ENCODE measurements at regions of chr7 and their contacts with region 1.

Region 1: DNA sequence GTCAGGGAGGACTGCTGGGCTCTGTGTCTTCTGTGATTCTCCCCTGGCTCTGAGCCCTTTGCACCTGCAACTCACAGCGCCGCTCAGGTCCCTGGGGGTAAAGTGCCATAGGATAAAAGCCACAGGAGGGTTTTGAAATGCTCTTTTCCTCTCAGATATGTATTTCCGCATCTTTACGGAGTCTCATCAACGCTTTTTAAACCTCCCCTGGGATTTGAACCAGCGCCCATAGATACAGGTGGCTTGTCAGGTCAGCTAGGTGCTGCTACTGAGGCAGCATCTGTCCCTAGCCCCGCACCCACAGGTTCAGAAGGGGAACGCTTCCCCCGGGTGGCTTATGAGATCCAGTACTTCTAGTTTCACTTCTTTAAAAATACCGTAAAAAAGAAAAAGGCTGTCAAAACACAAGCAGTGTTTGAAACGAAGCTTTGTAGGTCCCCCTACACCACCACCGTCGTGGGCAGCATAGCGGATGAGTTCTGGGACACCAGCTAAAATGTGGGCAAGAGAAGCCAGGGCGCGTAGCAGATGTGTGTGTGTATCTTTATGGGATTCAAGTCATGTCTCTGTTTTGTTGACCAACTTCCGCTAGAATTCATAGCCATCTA is 173.5 kb downstream of the CUX1 start:
- DNase-seq: peak; percentile 88
- ATAC-seq: peak; percentile 87
- H3K4me3 ChIP-seq: peak overlapping the region; percentile 50
- H3K27ac ChIP-seq: peak overlapping the region; percentile 93
- H3K4me1 ChIP-seq: peaks cover 74% of the 10 kb centered on the region
- H3K27me3 ChIP-seq: no peaks in the 10 kb centered on the region
- CTCF ChIP-seq: peak; percentile 2 to 7 (median 3); a peak in 1 of 6 replicates
- EP300 ChIP-seq: peak; percentile 85 to 87
- POLR2A ChIP-seq: peak; percentile 43; the same call in 1 of the 2 replicates
- RAD21 ChIP-seq: peak; percentile 43; the same call in 1 of the 2 replicates

Region 2: DNA sequence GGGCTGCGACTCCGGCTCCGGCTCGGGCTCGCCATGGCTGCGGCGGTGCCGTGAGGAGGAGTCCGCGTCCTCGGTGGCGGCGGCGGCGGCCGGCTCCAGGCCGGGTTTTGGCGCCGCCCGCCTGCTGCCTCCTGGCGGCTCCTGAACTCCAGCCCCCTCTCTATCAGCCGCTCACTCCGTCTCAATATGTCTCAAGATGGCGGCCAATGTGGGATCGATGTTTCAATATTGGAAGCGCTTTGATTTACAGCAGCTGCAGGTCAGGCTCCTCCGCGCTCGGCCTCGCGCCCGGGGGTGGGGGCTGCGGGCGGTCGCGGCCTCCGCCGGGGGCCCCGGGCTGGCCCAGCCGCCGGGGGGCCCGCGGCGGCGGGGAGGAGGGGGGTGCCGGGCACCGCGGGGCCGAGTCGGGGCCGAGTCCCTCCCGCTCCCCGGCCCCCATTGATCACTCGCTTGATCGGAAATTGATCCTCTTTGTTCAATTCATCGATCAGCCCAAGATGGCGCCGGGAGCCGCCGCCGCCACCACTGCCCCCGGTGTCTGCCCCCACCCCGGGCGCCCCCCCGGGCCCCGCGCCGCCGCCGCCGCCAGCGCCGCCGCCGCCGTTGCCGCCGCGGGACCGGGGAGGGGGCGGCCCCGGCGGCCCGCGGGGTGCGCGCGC is 175.0 kb before region 1 on chr7:
- CTCF ChIA-PET with region 1: interaction called, 4 read pairs
- POLR2A ChIA-PET with region 1: no interaction called
- RAD21 ChIA-PET with region 1: interaction called, 3 read pairs
- SMC1A ChIA-PET with region 1: interaction called, 9 read pairs
- in situ Hi-C with region 1: no loop called
- intact Hi-C with region 1: loop called (anchors 2 kb)
- DNase-seq: no peak
- ATAC-seq: peak; percentile 63
- H3K4me3 ChIP-seq: peak overlapping the region; percentile 53; the same call in 1 of the 2 replicates
- H3K27ac ChIP-seq: peak overlapping the region; percentile 68
- H3K4me1 ChIP-seq: peaks cover 4% of the 10 kb centered on the region; the same call in 1 of the 2 replicates
- H3K27me3 ChIP-seq: no peaks in the 10 kb centered on the region
- CTCF ChIP-seq: peak in 1 of 3 experiments; percentile 19; a peak in 2 of 6 replicates
- EP300 ChIP-seq: no peak
- POLR2A ChIP-seq: peak; percentile 69
- RAD21 ChIP-seq: no peak

Region 3: GRCh38 chr7:101941481-101942383 is 49.2 kb before region 1 on chr7:
- CTCF ChIA-PET with region 1: no interaction called
- POLR2A ChIA-PET with region 1: interaction called, 7 read pairs
- RAD21 ChIA-PET with region 1: interaction called, 9 read pairs
- SMC1A ChIA-PET with region 1: interaction called, 37 read pairs
- in situ Hi-C with region 1: no loop called
- intact Hi-C with region 1: no loop called
- DNase-seq: no peak
- ATAC-seq: peak; percentile 27
- H3K4me3 ChIP-seq: no peak overlapping the region
- H3K27ac ChIP-seq: peak overlapping the region; percentile 1; the same call in 1 of the 2 replicates
- H3K4me1 ChIP-seq: peaks cover 38% of the 10 kb centered on the region
- H3K27me3 ChIP-seq: no peaks in the 10 kb centered on the region
- CTCF ChIP-seq: no peak
- EP300 ChIP-seq: no peak
- POLR2A ChIP-seq: no peak
- RAD21 ChIP-seq: 0 out of 2 replicates have a peak, but pooled peaks have one; percentile 2

Region 4: DNA sequence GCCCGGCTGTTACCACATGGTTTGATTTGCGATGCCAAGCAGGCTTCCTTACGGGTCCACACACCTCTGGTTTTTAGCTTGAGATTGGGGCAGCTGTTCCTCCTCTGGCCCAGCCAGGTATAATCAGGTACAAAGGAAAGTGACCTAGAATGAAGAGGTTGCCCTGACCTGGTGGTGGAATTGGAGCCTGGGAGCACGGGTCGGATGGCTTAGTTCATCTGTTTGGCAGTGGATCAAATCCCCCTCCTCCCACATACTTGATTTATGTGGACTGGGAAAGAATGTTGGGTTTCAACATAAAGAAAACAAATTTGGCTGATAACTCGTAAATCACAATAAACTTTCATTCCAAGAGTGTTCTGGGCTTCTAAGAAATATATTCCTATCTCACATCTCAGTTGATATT is 13.3 kb after region 1 on chr7:
- CTCF ChIA-PET with region 1: interaction called, 8 read pairs
- POLR2A ChIA-PET with region 1: interaction called, 4 read pairs
- RAD21 ChIA-PET with region 1: interaction called, 9 read pairs
- SMC1A ChIA-PET with region 1: interaction called, 22 read pairs
- in situ Hi-C with region 1: no loop called
- intact Hi-C with region 1: no loop called
- DNase-seq: no peak
- ATAC-seq: no peak
- H3K4me3 ChIP-seq: no peak overlapping the region
- H3K27ac ChIP-seq: no peak overlapping the region
- H3K4me1 ChIP-seq: peaks cover 13% of the 10 kb centered on the region
- H3K27me3 ChIP-seq: no peaks in the 10 kb centered on the region
- CTCF ChIP-seq: no peak
- EP300 ChIP-seq: no peak
- POLR2A ChIP-seq: no peak
- RAD21 ChIP-seq: no peak

Region 5: DNA sequence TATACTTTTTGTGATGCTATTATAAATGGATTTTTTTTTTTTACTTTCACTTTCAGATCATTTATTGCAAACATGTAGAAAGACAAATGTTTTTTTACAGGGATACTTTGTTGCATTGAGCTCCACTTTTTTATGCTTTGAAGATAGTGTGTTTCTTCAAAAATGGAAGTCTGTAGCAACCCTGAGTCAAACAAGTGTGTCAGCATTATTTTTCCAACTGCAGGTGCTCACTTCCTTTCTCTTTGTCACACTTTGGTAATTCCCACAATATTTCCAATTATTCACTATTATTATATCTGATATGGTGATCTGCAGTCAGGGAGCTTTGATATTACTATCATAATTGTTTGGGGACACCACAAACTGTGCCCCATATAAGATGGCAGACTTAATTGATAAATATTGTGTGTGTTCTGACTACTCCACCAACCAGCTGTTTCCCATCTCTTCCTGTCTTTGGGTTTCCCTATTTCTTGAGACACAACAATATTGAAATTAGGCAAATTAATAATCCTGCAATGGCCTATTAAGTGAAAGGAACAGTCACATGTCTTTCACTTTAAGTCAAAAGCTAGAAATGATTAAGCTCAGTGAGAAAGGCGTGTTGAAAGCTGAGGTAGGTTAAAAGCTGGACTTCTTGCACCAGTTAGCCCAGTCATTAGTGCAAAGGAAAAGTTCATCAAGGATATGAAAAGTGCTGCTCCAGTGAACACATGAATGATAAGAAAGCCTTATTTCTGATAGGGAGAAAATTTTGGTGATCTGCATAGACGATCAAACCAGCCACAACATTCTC is 64.5 kb after region 1 on chr7:
- CTCF ChIA-PET with region 1: interaction called, 4 read pairs
- POLR2A ChIA-PET with region 1: interaction called, 4 read pairs
- RAD21 ChIA-PET with region 1: interaction called, 19 read pairs
- SMC1A ChIA-PET with region 1: interaction called, 9 read pairs
- in situ Hi-C with region 1: no loop called
- intact Hi-C with region 1: no loop called
- DNase-seq: no peak
- ATAC-seq: peak; percentile 89
- H3K4me3 ChIP-seq: no peak overlapping the region
- H3K27ac ChIP-seq: no peak overlapping the region
- H3K4me1 ChIP-seq: peaks cover 15% of the 10 kb centered on the region
- H3K27me3 ChIP-seq: no peaks in the 10 kb centered on the region
- CTCF ChIP-seq: no peak
- EP300 ChIP-seq: peak in 1 of 2 experiments; percentile 32; a peak in 1 of 4 replicates
- POLR2A ChIP-seq: no peak
- RAD21 ChIP-seq: no peak

Region 6: DNA sequence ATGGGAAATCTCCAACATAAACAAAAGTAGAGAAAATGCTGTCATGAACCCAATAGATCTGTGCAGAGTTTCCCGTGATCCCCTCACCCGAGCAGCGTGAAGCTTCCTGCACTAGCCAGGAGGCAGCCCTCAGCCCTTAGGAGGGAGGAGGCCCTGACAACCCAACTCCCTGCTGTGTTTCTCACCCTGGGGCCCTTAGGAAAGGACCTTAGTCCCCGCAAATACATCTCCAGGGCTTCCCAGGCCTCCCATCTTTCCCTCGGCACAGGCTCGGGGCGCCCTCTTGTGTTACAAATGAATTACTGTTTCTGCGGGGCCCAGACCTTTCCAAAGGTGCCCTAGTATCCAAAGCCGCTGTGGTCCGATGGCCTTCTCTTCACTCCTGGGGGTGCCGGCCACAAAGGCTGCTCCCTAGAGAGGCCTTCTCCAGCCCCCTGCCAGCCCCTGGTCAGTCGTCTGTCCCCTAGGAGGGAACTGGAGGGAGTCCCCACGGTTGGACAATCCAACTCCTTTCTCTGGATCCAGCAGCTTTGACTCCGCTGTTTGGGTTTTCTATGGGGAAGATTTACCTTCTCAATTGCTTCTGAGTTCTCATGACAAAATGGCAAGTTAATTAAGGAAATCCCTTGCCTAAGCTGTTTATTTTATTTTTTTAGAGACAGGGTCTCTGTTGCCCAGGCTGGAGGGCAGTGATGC is 245.8 kb after region 1 on chr7:
- CTCF ChIA-PET with region 1: interaction called, 11 read pairs
- POLR2A ChIA-PET with region 1: no interaction called
- RAD21 ChIA-PET with region 1: interaction called, 4 read pairs
- SMC1A ChIA-PET with region 1: no interaction called
- in situ Hi-C with region 1: no loop called
- intact Hi-C with region 1: no loop called
- DNase-seq: no peak
- ATAC-seq: peak; percentile 91
- H3K4me3 ChIP-seq: no peak overlapping the region
- H3K27ac ChIP-seq: no peak overlapping the region
- H3K4me1 ChIP-seq: peaks cover 8% of the 10 kb centered on the region
- H3K27me3 ChIP-seq: no peaks in the 10 kb centered on the region
- CTCF ChIP-seq: peak; percentile 70 to 91 (median 77)
- EP300 ChIP-seq: no peak
- POLR2A ChIP-seq: no peak
- RAD21 ChIP-seq: peak; percentile 98